CD4-positive, alpha-beta memory T cell (primary cell): ENCODE measurements at regions of chr11 and their contacts with region 1.

Region 1: GRCh38 chr11:62081378-62082291 is 42.2 kb upstream of the INCENP start:
- DNase-seq: peak; percentile 75 to 81 (median 78)
- H3K4me3 ChIP-seq: no peak overlapping the region
- H3K4me3 Mint-ChIP-seq: peak overlapping the region in 6 of 8 donors; percentile 3 to 84 (median 50)
- H3K27ac ChIP-seq: no peak overlapping the region
- H3K27ac Mint-ChIP-seq: peak overlapping the region in 6 of 7 donors; percentile 1 to 92 (median 50)
- H3K4me1 ChIP-seq: peaks cover 9% of the 10 kb centered on the region
- H3K4me1 Mint-ChIP-seq: peaks cover 3 to 7% (median 6%) of the 10 kb centered on the region in 4 donors
- H3K27me3 ChIP-seq: no peaks in the 10 kb centered on the region
- H3K27me3 Mint-ChIP-seq: peaks cover 0 to 2% of the 10 kb centered on the region in 2 donors

Region 2: GRCh38 chr11:61803889-61804647 is 277.6 kb before region 1 on chr11:
- CTCF ChIA-PET with region 1: interaction called, 169 read pairs
- POLR2A ChIA-PET with region 1: no interaction called
- intact Hi-C with region 1: no loop called
- DNase-seq: no peak
- H3K4me3 ChIP-seq: no peak overlapping the region
- H3K4me3 Mint-ChIP-seq: no peak overlapping the region
- H3K27ac ChIP-seq: no peak overlapping the region
- H3K27ac Mint-ChIP-seq: peak overlapping the region in 1 of 7 donors; percentile 24
- H3K4me1 ChIP-seq: no peaks in the 10 kb centered on the region
- H3K4me1 Mint-ChIP-seq: no peaks in the 10 kb centered on the region
- H3K27me3 ChIP-seq: no peaks in the 10 kb centered on the region
- H3K27me3 Mint-ChIP-seq: no peaks in the 10 kb centered on the region

Region 3: GRCh38 chr11:61891331-61892084 is 190.1 kb before region 1 on chr11 and contains the start of gene FADS3:
- CTCF ChIA-PET with region 1: interaction called, 387 read pairs
- POLR2A ChIA-PET with region 1: interaction called, 3 read pairs
- intact Hi-C with region 1: no loop called
- DNase-seq: peak; percentile 56 to 78 (median 62)
- H3K4me3 ChIP-seq: peak within 1 kb of the TSS; percentile 29 to 45
- H3K4me3 Mint-ChIP-seq: peak within 1 kb of the TSS; percentile 81 to 91 (median 86)
- H3K27ac ChIP-seq: peak within 1 kb of the TSS; percentile 69
- H3K27ac Mint-ChIP-seq: peak within 1 kb of the TSS; percentile 49 to 92 (median 82)
- H3K4me1 ChIP-seq: peaks cover 11% of the 10 kb centered on the region
- H3K4me1 Mint-ChIP-seq: peaks cover 2 to 14% (median 6%) of the 10 kb centered on the region in 4 donors
- H3K27me3 ChIP-seq: no peaks in the 10 kb centered on the region
- H3K27me3 Mint-ChIP-seq: no peaks in the 10 kb centered on the region
- total RNA-seq, gene FADS3: 5.9 to 7.8 TPM

Region 4: DNA sequence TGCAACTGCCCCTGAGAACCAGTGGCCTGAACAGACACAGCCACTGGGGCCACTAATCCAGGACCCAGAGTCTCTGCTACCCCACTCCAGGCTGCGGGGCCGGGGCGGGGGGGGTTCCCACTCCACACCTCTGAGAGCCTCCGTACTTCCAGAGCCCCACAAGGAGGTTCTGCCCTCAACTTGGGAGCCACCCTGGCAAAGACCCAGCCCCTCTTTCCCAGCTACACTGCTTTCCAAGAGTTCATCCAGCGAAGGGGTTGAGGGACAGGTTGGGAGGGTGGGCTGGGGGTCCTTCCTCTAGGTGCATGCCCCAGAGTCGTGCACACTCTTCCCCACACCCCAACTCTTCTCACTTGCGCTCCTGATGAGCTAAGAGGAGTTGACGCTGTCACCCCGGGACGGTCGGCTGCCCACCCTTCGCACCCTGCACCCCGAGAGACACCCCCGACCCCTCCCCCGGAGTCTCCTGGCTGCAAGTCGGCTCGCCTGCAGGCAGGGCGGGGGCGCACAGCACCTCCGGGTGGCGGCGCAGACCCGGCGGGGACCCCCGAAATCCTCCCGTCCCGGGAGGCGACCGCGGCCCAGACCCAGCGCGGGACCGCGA is 164.8 kb before region 1 on chr11:
- CTCF ChIA-PET with region 1: interaction called, 11 read pairs
- POLR2A ChIA-PET with region 1: no interaction called
- intact Hi-C with region 1: no loop called
- DNase-seq: no peak
- H3K4me3 ChIP-seq: no peak overlapping the region
- H3K4me3 Mint-ChIP-seq: peak overlapping the region; percentile 25 to 73 (median 58)
- H3K27ac ChIP-seq: no peak overlapping the region
- H3K27ac Mint-ChIP-seq: no peak overlapping the region
- H3K4me1 ChIP-seq: no peaks in the 10 kb centered on the region
- H3K4me1 Mint-ChIP-seq: peaks cover 3 to 14% (median 9%) of the 10 kb centered on the region in 4 donors
- H3K27me3 ChIP-seq: peaks cover 8% of the 10 kb centered on the region
- H3K27me3 Mint-ChIP-seq: peaks cover 30 to 57% of the 10 kb centered on the region in 2 donors

Region 5: GRCh38 chr11:62025487-62026105 is 56.0 kb before region 1 on chr11:
- CTCF ChIA-PET with region 1: interaction called, 49 read pairs
- POLR2A ChIA-PET with region 1: interaction called, 20 read pairs
- intact Hi-C with region 1: loop called (anchors 1 kb)
- DNase-seq: peak; percentile 90 to 98 (median 95)
- H3K4me3 ChIP-seq: peak overlapping the region in 1 of 2 donors; percentile 35
- H3K4me3 Mint-ChIP-seq: peak overlapping the region; percentile 67 to 91 (median 78)
- H3K27ac ChIP-seq: peak overlapping the region; percentile 86
- H3K27ac Mint-ChIP-seq: peak overlapping the region; percentile 94 to 100 (median 100)
- H3K4me1 ChIP-seq: peaks cover 24% of the 10 kb centered on the region
- H3K4me1 Mint-ChIP-seq: peaks cover 13 to 30% (median 23%) of the 10 kb centered on the region in 4 donors
- H3K27me3 ChIP-seq: no peaks in the 10 kb centered on the region
- H3K27me3 Mint-ChIP-seq: no peaks in the 10 kb centered on the region

Region 6: GRCh38 chr11:62064226-62064625 is 17.4 kb before region 1 on chr11:
- CTCF ChIA-PET with region 1: interaction called, 24 read pairs
- POLR2A ChIA-PET with region 1: no interaction called
- intact Hi-C with region 1: no loop called
- DNase-seq: no peak
- H3K4me3 ChIP-seq: no peak overlapping the region
- H3K4me3 Mint-ChIP-seq: no peak overlapping the region
- H3K27ac ChIP-seq: no peak overlapping the region
- H3K27ac Mint-ChIP-seq: peak overlapping the region in 2 of 7 donors; percentile 13 to 72
- H3K4me1 ChIP-seq: no peaks in the 10 kb centered on the region
- H3K4me1 Mint-ChIP-seq: no peaks in the 10 kb centered on the region
- H3K27me3 ChIP-seq: no peaks in the 10 kb centered on the region
- H3K27me3 Mint-ChIP-seq: peaks cover 4 to 11% of the 10 kb centered on the region in 2 donors

Region 7: GRCh38 chr11:62217191-62217748 is 135.6 kb after region 1 on chr11:
- CTCF ChIA-PET with region 1: no interaction called
- POLR2A ChIA-PET with region 1: no interaction called
- intact Hi-C with region 1: no loop called
- DNase-seq: no peak
- H3K4me3 ChIP-seq: no peak overlapping the region
- H3K4me3 Mint-ChIP-seq: no peak overlapping the region
- H3K27ac ChIP-seq: no peak overlapping the region
- H3K27ac Mint-ChIP-seq: no peak overlapping the region
- H3K4me1 ChIP-seq: no peaks in the 10 kb centered on the region
- H3K4me1 Mint-ChIP-seq: no peaks in the 10 kb centered on the region
- H3K27me3 ChIP-seq: no peaks in the 10 kb centered on the region
- H3K27me3 Mint-ChIP-seq: peaks cover 11 to 22% of the 10 kb centered on the region in 2 donors